Gastrocnemius medialis (tissue), 4 donors: ENCODE measurements at regions of chr5 and their contacts with region 1.

Region 1: GRCh38 chr5:36241631-36242533 is at the start of gene NADK2:
- DNase-seq: peak; percentile 92 to 93
- ATAC-seq: peak; percentile 89
- H3K4me3 ChIP-seq: peak within 1 kb of the TSS; percentile 86 to 99 (median 95)
- H3K27ac ChIP-seq: peak within 1 kb of the TSS; percentile 96 to 99 (median 98)
- H3K4me1 ChIP-seq: peaks cover 38 to 44% of the 10 kb centered on the region in 2 donors
- H3K27me3 ChIP-seq: no peaks in the 10 kb centered on the region
- CTCF ChIP-seq: peak; percentile 48 to 79 (median 76)
- POLR2A ChIP-seq: peak; percentile 84 to 95
- total RNA-seq, gene NADK2: 23.6 to 34.4 (median 27.8) TPM

Region 2: DNA sequence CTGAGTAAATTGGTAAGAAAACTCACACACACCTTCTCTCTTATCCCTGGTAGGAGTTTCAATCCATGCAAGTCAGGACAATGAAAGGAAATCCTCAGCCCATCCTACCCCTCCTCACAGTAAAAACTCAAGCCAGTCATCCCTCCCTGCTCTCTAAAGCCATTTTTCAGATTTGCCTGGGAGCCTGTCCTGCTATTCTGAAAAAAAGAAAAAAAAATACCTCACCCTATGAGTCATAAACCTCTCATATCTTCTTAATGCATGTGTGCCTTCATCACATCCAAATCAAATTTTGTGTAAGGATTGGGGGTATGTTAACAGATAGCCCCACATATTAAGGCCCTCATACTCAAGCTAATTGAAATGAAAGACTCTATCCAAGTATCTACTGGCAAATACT is 189.3 kb before region 1 on chr5:
- in situ Hi-C with region 1: no loop called
- intact Hi-C with region 1: no loop called
- DNase-seq: no peak
- ATAC-seq: no peak
- H3K4me3 ChIP-seq: no peak overlapping the region
- H3K27ac ChIP-seq: no peak overlapping the region
- H3K4me1 ChIP-seq: no peaks in the 10 kb centered on the region
- H3K27me3 ChIP-seq: no peaks in the 10 kb centered on the region
- CTCF ChIP-seq: no peak
- POLR2A ChIP-seq: no peak

Region 3: GRCh38 chr5:36151434-36152323 is 90.2 kb before region 1 on chr5 and contains the starts of genes LMBRD2 and SKP2:
- in situ Hi-C with region 1: no loop called
- intact Hi-C with region 1: loop called (anchors 2 kb)
- DNase-seq: peak; percentile 96
- ATAC-seq: peak; percentile 99
- H3K4me3 ChIP-seq: peak within 1 kb of the TSS; percentile 89 to 99 (median 92)
- H3K27ac ChIP-seq: peak within 1 kb of the TSS; percentile 88 to 95 (median 92)
- H3K4me1 ChIP-seq: peaks cover 32 to 41% of the 10 kb centered on the region in 2 donors
- H3K27me3 ChIP-seq: no peaks in the 10 kb centered on the region
- CTCF ChIP-seq: no peak
- POLR2A ChIP-seq: peak; percentile 58 to 74
- total RNA-seq, gene LMBRD2: 12.2 to 29.0 (median 21.3) TPM
- total RNA-seq, gene SKP2: 2.8 to 6.7 (median 3.1) TPM

Region 4: DNA sequence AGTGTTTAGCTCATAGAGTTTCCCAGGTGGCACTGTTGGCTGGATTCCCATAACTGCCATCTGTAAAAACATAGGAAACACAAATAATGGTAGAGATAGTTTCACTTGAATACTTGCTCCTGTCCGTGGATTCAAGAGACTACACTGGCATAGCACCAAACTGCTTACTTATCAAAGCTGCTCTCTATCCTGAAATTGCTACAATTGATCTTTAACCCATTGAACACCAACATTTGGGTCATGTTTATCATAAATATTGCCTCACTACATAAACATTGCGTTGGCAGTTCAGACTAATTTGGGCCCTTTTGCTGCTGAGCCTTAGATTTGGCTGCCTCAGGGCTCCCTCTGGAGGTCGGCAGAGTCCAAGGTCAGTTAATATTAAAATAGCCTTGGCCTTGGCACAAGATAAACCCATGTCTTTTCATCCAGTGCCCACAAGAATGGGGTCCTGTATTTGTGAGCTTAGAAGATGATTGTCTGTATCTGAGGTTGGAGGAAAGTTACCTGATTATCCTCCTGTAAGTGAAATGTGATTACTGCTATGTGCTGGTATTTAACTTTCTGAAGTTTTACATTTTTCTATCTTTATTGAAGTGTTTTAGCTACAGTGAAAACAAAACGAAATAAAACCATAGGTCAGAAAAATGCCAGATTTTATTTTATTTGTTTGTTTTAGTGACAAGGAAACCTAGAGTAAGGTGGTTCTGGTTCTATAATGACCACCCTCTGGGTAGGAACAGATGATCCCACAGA is 63.9 kb after region 1 on chr5:
- in situ Hi-C with region 1: no loop called
- intact Hi-C with region 1: loop called (anchors 1 kb)
- DNase-seq: peak in 1 of 2 donors; percentile 23
- ATAC-seq: peak; percentile 57 to 79
- H3K4me3 ChIP-seq: no peak overlapping the region
- H3K27ac ChIP-seq: no peak overlapping the region
- H3K4me1 ChIP-seq: peaks cover 19 to 23% of the 10 kb centered on the region in 2 donors
- H3K27me3 ChIP-seq: no peaks in the 10 kb centered on the region
- CTCF ChIP-seq: peak; percentile 58 to 69 (median 62)
- POLR2A ChIP-seq: no peak

Region 5: GRCh38 chr5:36397901-36398536 is 156.1 kb after region 1 on chr5:
- in situ Hi-C with region 1: no loop called
- intact Hi-C with region 1: loop called (anchors 10 kb)
- DNase-seq: no peak
- ATAC-seq: no peak
- H3K4me3 ChIP-seq: no peak overlapping the region
- H3K27ac ChIP-seq: no peak overlapping the region
- H3K4me1 ChIP-seq: no peaks in the 10 kb centered on the region
- H3K27me3 ChIP-seq: no peaks in the 10 kb centered on the region
- CTCF ChIP-seq: no peak
- POLR2A ChIP-seq: no peak

Region 6: GRCh38 chr5:36507332-36507952 is 265.6 kb after region 1 on chr5:
- in situ Hi-C with region 1: no loop called
- intact Hi-C with region 1: loop called (anchors 10 kb)
- DNase-seq: peak; percentile 30 to 56
- ATAC-seq: peak; percentile 60 to 70
- H3K4me3 ChIP-seq: no peak overlapping the region
- H3K27ac ChIP-seq: no peak overlapping the region
- H3K4me1 ChIP-seq: no peaks in the 10 kb centered on the region
- H3K27me3 ChIP-seq: no peaks in the 10 kb centered on the region
- CTCF ChIP-seq: peak in 4 of 5 experiments; percentile 48 to 80 (median 68)
- POLR2A ChIP-seq: no peak

Region 7: GRCh38 chr5:36875790-36876388 is 634.0 kb after region 1 on chr5:
- in situ Hi-C with region 1: loop called in 1 of 4 experiments (anchors 25 kb)
- intact Hi-C with region 1: loop called (anchors 1 kb)
- DNase-seq: peak; percentile 67 to 78
- ATAC-seq: peak; percentile 69 to 77
- H3K4me3 ChIP-seq: peak overlapping the region; percentile 93 to 99 (median 98)
- H3K27ac ChIP-seq: peak overlapping the region; percentile 91 to 100 (median 100)
- H3K4me1 ChIP-seq: peaks cover 46 to 55% of the 10 kb centered on the region in 2 donors
- H3K27me3 ChIP-seq: no peaks in the 10 kb centered on the region
- CTCF ChIP-seq: peak; percentile 14 to 66 (median 34)
- POLR2A ChIP-seq: no peak